Stomach (tissue), 19 donors: ENCODE measurements at regions of chr1 and their contacts with region 1.

Region 1: DNA sequence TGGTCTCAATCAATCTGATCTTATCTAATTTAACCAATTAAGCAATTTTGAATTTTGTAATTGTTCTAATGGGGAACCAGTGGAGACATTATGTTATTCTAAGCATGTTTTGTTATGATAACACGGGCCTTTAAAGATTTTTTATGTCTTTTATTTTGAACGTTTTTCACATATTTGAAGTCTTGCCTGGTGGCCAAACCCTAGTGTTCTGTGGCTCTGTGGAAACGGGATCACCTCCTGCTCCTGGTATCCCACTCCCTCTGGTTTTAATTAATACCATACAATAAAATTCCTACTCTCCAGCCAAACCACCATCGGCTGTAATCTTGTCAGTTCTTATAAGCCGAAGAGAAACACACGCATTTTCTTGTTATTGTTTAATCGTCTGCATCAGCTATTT is 22.9 kb upstream of the LMO4 start:
- DNase-seq: no peak
- H3K4me3 ChIP-seq: no peak overlapping the region
- H3K27ac ChIP-seq: no peak overlapping the region
- H3K4me1 ChIP-seq: no peaks in the 10 kb centered on the region
- H3K27me3 ChIP-seq: no peaks in the 10 kb centered on the region
- CTCF ChIP-seq: no peak
- EP300 ChIP-seq: no peak
- POLR2A ChIP-seq: no peak

Region 2: DNA sequence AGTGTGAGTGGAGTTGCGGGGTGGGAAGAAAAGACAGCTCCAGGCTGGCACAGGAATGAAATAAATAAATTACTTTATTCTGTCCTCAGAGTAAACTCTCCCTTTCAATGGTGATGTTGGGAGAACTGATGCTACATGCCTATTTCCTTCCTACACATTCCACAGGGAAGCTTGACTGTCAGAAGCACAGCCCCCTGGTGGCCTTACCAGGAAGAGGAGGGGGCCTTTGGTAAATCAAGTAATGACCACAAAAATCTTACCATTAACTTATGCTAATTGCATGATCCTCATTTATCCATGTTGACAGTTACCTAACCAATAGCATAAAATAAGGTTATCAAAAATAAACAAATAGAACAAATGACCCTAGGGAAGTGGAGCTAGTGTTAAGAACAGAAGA is 773.3 kb after region 1 on chr1:
- intact Hi-C with region 1: loop called (anchors 10 kb)
- DNase-seq: peak in 1 of 2 donors; percentile 9
- H3K4me3 ChIP-seq: no peak overlapping the region
- H3K27ac ChIP-seq: no peak overlapping the region
- H3K4me1 ChIP-seq: no peaks in the 10 kb centered on the region
- H3K27me3 ChIP-seq: no peaks in the 10 kb centered on the region
- CTCF ChIP-seq: peak in 1 of 7 experiments; percentile 9
- EP300 ChIP-seq: no peak
- POLR2A ChIP-seq: no peak